GM10248 (cell line): ENCODE measurements at regions of chr7 and their contacts with region 1.

Region 1: GRCh38 chr7:91953618-91954017 is 13.0 kb downstream of the AKAP9 start:
- DNase-seq: no peak
- CTCF ChIP-seq: peak; percentile 25

Region 2: DNA sequence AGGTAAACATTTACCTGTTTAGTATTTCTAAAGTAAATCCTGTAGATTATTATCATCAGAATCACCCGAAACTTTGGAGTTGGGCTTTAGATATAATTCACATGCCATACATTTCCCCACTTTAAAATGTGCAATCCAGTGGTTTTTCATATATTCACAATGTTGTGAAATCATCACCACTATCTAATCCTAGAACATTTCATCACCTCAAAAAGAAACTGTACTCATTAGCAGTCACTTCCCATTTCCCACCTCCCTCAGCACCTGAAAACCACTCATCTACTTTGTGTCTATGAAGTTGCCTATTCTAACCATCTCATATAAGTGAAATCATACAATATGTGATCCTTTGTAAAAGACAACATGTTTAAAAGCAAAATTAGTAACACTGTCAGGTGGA is 506.8 kb before region 1 on chr7:
- CTCF ChIA-PET with region 1: no interaction called
- POLR2A ChIA-PET with region 1: no interaction called
- DNase-seq: no peak
- CTCF ChIP-seq: no peak

Region 3: GRCh38 chr7:91940572-91941341 is 12.9 kb before region 1 on chr7 and contains the start of gene AKAP9:
- CTCF ChIA-PET with region 1: interaction called, 12 read pairs
- POLR2A ChIA-PET with region 1: no interaction called
- DNase-seq: peak; percentile 92
- CTCF ChIP-seq: peak; percentile 5

Region 4: DNA sequence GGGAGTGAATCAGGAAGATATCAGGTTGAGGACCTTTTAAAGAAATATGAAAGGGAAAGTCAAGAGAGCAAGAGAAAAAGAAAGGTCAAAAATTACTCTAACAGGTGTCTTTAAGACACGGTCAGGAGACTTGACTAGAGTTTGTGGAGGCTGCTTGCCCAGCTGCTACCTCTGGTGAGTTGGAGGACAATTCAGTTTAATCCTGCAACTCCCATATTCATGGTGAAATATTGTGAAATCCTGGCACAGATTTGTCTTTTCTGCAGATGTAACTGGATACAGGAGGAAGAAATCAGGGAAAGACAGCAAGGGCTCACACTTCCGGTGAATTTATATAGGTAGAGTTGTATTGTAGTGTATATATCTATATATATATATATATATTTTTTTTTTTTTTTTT is 80.5 kb after region 1 on chr7:
- CTCF ChIA-PET with region 1: no interaction called
- POLR2A ChIA-PET with region 1: no interaction called
- DNase-seq: no peak
- CTCF ChIP-seq: no peak